ENCODE measurements at regions of chr3 and their contacts with region 1.

Region 1: DNA sequence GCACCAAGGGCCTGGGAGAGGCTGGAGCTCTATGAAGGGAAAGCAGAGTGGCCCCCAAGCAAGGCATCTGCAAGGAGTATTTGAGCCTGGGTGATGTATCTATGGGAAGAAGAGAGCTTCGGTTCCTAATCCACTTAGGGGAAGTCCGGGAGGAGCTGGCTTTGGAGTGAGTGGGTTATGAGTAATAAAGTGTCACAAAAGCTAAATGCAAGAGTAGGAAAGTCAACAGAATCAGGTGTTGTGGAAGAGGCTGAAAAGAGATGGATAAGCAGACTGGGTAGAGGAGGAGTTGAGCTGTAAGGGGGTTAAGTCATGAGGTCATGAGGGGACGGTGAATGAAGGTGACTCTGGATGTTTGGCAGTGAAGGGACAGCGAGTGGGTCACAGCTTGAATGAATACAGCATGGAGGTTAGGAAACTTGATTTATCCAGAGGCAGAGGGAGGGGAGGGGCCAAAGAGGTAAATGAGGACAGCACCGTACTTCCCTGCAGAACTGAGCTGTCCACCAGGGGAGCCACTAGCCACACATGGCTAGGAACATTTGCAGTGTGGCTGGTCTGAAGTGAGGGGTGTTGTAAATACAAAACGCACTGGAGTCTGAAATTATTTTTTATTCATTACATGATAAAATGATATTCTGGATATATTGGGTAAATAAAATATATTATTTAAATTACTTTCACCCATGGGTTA is 83.3 kb downstream of the ADCY5 start:
- DNase-seq: peak in 1 of 2 experiments; percentile 25
- H3K4me3 ChIP-seq: no peak overlapping the region
- H3K27ac ChIP-seq: no peak overlapping the region
- H3K4me1 ChIP-seq: peaks cover 0 to 2% (median 0%) of the 10 kb centered on the region in 4 experiments; a peak in 1 of 7 replicates
- H3K27me3 ChIP-seq: no peaks in the 10 kb centered on the region
- CTCF ChIP-seq: peak; percentile 74 to 96 (median 90)
- EP300 ChIP-seq: no peak
- POLR2A ChIP-seq: no peak
- RAD21 ChIP-seq: peak; percentile 65 to 72

Region 2: DNA sequence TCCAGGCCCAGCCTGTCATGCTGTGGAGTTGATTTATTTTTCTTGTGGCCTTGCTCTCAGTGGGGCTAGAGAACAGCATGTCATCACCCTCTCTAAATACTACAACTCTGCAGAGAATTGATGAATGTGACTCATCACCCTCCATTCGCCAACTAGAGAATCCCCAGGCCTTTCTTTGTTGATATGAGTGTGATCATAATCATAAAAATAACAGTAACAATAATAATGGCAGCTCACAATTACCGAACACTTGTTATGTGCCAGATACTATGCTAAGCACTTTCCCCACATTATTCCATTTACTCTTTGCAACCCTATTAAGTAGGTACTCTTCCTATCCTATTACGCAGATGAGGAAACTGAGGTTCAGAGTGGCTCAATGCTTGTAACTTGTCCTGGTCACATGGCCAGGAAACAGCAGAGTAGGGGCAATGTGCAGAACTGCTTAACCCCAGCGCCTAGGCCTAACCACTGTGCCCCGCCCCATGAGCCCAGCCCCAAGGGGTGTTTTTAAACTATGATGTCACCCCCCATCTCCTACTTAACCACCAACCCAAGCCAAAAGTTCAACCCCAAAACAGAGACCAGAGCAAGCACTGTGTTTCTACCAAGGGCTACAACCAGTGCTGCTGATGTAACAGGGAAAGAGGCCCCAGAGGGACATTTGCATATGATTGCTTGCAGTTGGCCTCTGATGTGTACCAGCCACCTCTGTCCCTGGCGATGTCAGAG is 21.3 kb before region 1 on chr3:
- CTCF ChIA-PET with region 1: interaction called, 34 read pairs
- POLR2A ChIA-PET with region 1: no interaction called
- DNase-seq: no peak
- H3K4me3 ChIP-seq: no peak overlapping the region
- H3K27ac ChIP-seq: no peak overlapping the region
- H3K4me1 ChIP-seq: peaks cover 5 to 17% (median 9%) of the 10 kb centered on the region in 4 experiments; a peak in 6 of 7 replicates
- H3K27me3 ChIP-seq: no peaks in the 10 kb centered on the region
- CTCF ChIP-seq: no peak
- EP300 ChIP-seq: no peak
- POLR2A ChIP-seq: no peak
- RAD21 ChIP-seq: no peak

Region 3: DNA sequence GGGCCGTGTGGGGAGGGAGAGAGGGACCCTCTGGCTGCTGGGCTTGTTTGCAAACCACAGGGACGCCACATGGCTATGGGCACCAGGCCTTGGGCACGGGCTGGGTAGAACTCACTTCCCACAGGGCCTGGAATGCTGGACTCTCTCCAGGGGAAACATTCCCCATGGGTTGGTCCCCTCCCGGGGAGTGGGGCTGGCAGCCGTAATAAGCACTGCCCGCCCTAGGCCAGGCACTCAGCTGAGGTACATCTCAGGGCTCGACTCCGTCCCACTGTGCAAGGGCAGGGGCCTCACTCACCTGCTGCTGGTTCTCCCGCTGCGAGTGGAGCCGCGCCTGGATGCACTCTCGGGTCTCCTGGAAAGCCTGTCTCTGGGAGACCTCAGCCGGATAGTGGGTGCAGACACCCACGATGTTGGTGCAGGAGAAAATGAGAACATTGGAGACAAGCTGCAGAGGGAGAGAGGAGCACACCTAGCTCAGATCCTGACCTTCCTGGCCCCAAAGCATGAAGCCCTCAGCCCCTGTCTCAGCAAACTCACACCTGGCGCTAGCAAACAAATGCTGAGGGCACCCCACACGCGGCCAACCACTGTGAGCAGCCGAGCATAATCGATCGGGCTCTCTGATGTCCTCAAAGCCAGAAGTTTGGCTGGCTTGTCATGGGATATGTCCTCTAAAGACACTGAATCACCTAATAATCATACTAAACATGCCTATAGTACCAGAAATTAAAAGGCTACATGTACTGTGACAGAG is 13.3 kb before region 1 on chr3:
- CTCF ChIA-PET with region 1: interaction called, 34 read pairs
- POLR2A ChIA-PET with region 1: interaction called, 3 read pairs
- DNase-seq: no peak
- H3K4me3 ChIP-seq: no peak overlapping the region
- H3K27ac ChIP-seq: no peak overlapping the region
- H3K4me1 ChIP-seq: peaks cover 0 to 14% (median 5%) of the 10 kb centered on the region in 4 experiments; a peak in 3 of 7 replicates
- H3K27me3 ChIP-seq: no peaks in the 10 kb centered on the region
- CTCF ChIP-seq: no peak
- EP300 ChIP-seq: no peak
- POLR2A ChIP-seq: no peak
- RAD21 ChIP-seq: no peak

Region 4: DNA sequence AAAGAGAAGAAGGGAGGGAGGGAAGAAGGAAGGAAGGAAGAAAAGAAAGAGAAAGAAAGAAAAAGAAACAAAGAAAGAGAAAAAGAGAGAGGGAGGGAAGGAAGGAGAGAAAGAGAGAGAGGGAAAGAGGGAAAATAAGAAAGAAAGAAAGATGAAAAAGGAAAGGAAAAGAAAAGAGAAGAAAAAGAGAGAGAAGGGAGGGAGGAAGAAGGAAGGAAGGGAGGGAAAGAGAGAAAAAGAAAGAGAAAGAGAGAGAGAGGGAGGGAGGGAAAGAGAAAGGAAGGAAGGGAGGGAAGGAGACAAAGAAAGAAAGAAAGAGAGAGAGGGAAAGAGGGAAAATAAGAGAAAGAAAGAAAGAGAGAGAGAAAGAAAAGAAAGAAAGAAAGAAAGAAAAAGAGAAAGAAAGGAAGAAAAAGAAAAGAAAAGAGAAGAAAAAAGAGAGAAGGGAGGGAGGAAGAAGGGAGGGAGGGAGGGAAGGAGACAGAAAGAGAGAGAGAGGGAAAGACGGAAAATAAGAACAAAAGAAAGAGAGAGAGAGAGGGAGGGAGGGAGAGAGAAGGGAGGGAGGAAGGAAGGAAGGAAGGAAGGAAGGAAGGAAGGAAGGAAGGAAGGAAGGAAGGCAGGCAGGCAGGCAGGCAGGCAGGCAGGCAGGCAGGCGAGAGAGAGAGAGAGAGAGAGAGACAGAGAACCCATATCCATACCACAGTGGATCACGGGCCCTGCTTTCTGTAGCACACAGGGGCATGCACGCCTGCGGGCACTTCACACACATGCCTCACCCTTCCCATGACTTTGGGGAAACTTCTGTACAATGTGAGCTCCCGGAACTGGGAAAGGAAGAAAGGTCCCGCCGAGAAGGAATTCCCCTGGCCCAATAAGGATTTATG is 30.8 kb after region 1 on chr3:
- CTCF ChIA-PET with region 1: interaction called, 10 read pairs
- POLR2A ChIA-PET with region 1: no interaction called
- DNase-seq: no peak
- H3K4me3 ChIP-seq: no peak overlapping the region
- H3K27ac ChIP-seq: no peak overlapping the region
- H3K4me1 ChIP-seq: no peaks in the 10 kb centered on the region; a peak in 1 of 7 replicates
- H3K27me3 ChIP-seq: no peaks in the 10 kb centered on the region
- CTCF ChIP-seq: no peak
- EP300 ChIP-seq: no peak
- POLR2A ChIP-seq: no peak
- RAD21 ChIP-seq: no peak

Region 5: DNA sequence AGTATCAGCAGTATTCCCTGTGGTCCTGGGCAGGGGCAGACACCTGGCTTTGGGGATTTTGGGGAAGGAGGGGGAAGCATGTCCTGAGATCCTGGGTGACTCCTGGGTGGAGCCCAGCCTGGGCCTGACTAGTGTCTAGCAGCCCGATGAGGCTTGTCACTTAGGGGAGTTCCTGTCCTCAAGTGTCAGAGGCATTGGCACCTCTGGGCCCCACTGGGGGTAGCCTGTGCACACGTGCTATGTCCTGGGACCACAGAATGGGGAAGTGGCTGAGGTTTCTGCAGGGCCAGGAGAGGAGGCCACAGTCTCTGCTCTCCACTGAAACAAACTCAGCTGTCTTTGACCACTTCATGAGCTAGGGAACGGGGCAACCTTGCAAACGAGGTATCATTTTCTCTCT is 114.8 kb after region 1 on chr3:
- CTCF ChIA-PET with region 1: interaction called, 10 read pairs
- POLR2A ChIA-PET with region 1: no interaction called
- DNase-seq: no peak
- H3K4me3 ChIP-seq: no peak overlapping the region
- H3K27ac ChIP-seq: no peak overlapping the region
- H3K4me1 ChIP-seq: no peaks in the 10 kb centered on the region
- H3K27me3 ChIP-seq: no peaks in the 10 kb centered on the region; a peak in 1 of 7 replicates
- CTCF ChIP-seq: no peak
- EP300 ChIP-seq: no peak
- POLR2A ChIP-seq: no peak
- RAD21 ChIP-seq: no peak

Measured in H1 (cell line).